ENCODE measurements at regions of chr21 and their contacts with region 1.

Region 1: DNA sequence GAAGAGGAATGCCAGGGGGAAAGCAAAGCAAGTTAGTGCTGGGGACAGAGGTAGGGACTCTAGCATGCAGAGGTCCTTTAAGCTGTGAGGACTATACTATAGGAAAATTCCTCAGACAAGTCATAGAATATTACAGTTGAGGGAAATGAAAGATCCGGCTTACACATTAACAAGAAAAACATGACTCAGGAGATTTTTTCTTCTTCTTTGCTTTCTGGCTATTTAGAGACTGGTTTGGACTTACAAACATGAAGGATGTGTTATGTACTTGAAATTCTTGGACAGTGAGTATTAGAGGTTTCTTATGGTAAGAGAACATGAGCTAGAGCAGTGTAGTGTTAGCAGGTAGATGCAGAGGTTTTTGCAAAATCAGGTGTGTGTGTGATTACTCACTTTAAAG is 24.9 kb downstream of the USP25 start:
- DNase-seq: no peak
- H3K4me3 ChIP-seq: peak overlapping the region in 1 of 4 experiments; percentile 4; a peak in 1 of 8 replicates
- H3K27ac ChIP-seq: no peak overlapping the region
- H3K4me1 ChIP-seq: peaks cover 1 to 23% (median 17%) of the 10 kb centered on the region in 4 experiments; a peak in 6 of 7 replicates
- H3K27me3 ChIP-seq: no peaks in the 10 kb centered on the region
- CTCF ChIP-seq: no peak
- EP300 ChIP-seq: no peak
- POLR2A ChIP-seq: no peak
- RAD21 ChIP-seq: no peak

Region 2: GRCh38 chr21:15729674-15730483 is 24.8 kb before region 1 on chr21 and contains the start of gene USP25:
- CTCF ChIA-PET with region 1: interaction called, 3 read pairs
- POLR2A ChIA-PET with region 1: interaction called, 26 read pairs
- DNase-seq: peak; percentile 57 to 88
- H3K4me3 ChIP-seq: peak within 1 kb of the TSS; percentile 78 to 98 (median 90)
- H3K27ac ChIP-seq: peak within 1 kb of the TSS; percentile 80; the same call in 1 of the 2 replicates
- H3K4me1 ChIP-seq: peaks cover 0 to 2% (median 0%) of the 10 kb centered on the region in 4 experiments; a peak in 2 of 7 replicates
- H3K27me3 ChIP-seq: no peaks in the 10 kb centered on the region; a peak in 2 of 7 replicates
- CTCF ChIP-seq: peak in 2 of 3 experiments; percentile 6 to 36; a peak in 2 of 4 replicates
- EP300 ChIP-seq: peak in 1 of 2 experiments; percentile 3; a peak in 1 of 3 replicates
- POLR2A ChIP-seq: peak; percentile 79 to 86
- RAD21 ChIP-seq: peak in 1 of 2 experiments; percentile 28; a peak in 1 of 4 replicates
- total RNA-seq, gene USP25: 43.6 and 48.1 TPM in 2 replicates

Region 3: GRCh38 chr21:15742052-15742670 is 12.5 kb before region 1 on chr21:
- CTCF ChIA-PET with region 1: interaction called, 4 read pairs
- POLR2A ChIA-PET with region 1: interaction called, 14 read pairs
- DNase-seq: no peak
- H3K4me3 ChIP-seq: no peak overlapping the region
- H3K27ac ChIP-seq: no peak overlapping the region
- H3K4me1 ChIP-seq: peaks cover 4 to 33% (median 13%) of the 10 kb centered on the region in 4 experiments
- H3K27me3 ChIP-seq: no peaks in the 10 kb centered on the region
- CTCF ChIP-seq: no peak
- EP300 ChIP-seq: no peak
- POLR2A ChIP-seq: no peak
- RAD21 ChIP-seq: no peak